ENCODE measurements at regions of chr9 and their contacts with region 1.

Region 1: GRCh38 chr9:33290247-33291030 is at the start of gene NFX1:
- DNase-seq: peak; percentile 97 to 100 (median 99)
- ATAC-seq: peak; percentile 76
- H3K4me3 ChIP-seq: peak within 1 kb of the TSS; percentile 57 to 73
- H3K4me3 Mint-ChIP-seq: peak within 1 kb of the TSS; percentile 88
- H3K27ac ChIP-seq: peak within 1 kb of the TSS; percentile 96 to 98
- H3K27ac Mint-ChIP-seq: peak within 1 kb of the TSS; percentile 100
- H3K4me1 ChIP-seq: peaks cover 62% of the 10 kb centered on the region
- H3K4me1 Mint-ChIP-seq: peaks cover 66% of the 10 kb centered on the region
- H3K27me3 ChIP-seq: no peaks in the 10 kb centered on the region
- H3K27me3 Mint-ChIP-seq: no peaks in the 10 kb centered on the region
- CTCF ChIP-seq: no peak
- total RNA-seq, gene NFX1: 32.9 to 37.9 TPM

Region 2: DNA sequence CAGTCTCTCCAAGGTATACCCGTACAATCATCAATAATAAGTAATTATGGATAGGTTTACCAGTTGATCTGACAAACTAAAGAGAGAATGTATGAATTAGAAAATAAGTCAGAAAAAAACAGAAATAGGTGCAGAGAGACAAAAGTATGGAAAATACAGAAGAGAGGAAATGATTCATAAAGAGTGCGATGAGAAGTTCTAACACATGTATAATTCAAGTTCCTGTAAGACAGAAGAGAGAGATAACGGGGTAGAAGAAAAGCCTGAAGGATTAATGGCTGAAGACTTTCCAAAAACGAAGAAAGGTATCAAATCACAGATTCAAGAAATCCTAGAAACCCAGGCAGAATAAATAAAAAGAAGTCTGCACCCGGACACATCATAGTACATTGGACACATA is 197.8 kb before region 1 on chr9:
- CTCF ChIA-PET with region 1: no interaction called
- POLR2A ChIA-PET with region 1: no interaction called
- intact Hi-C with region 1: no loop called
- DNase-seq: no peak
- ATAC-seq: no peak
- H3K4me3 ChIP-seq: no peak overlapping the region
- H3K4me3 Mint-ChIP-seq: no peak overlapping the region
- H3K27ac ChIP-seq: no peak overlapping the region
- H3K27ac Mint-ChIP-seq: no peak overlapping the region
- H3K4me1 ChIP-seq: no peaks in the 10 kb centered on the region
- H3K4me1 Mint-ChIP-seq: peaks cover 9% of the 10 kb centered on the region
- H3K27me3 ChIP-seq: no peaks in the 10 kb centered on the region
- H3K27me3 Mint-ChIP-seq: no peaks in the 10 kb centered on the region
- CTCF ChIP-seq: no peak

Region 3: GRCh38 chr9:33167046-33167808 is 123.2 kb before region 1 on chr9 and contains the start of gene B4GALT1:
- CTCF ChIA-PET with region 1: no interaction called
- POLR2A ChIA-PET with region 1: interaction called, 7 read pairs
- intact Hi-C with region 1: loop called in 1 of 2 experiments (anchors 1 kb)
- DNase-seq: peak; percentile 94 to 99 (median 97)
- ATAC-seq: peak; percentile 82
- H3K4me3 ChIP-seq: peak within 1 kb of the TSS; percentile 86 to 96
- H3K4me3 Mint-ChIP-seq: peak within 1 kb of the TSS; percentile 93
- H3K27ac ChIP-seq: peak within 1 kb of the TSS; percentile 79 to 94
- H3K27ac Mint-ChIP-seq: peak within 1 kb of the TSS; percentile 99
- H3K4me1 ChIP-seq: peaks cover 54% of the 10 kb centered on the region
- H3K4me1 Mint-ChIP-seq: peaks cover 62% of the 10 kb centered on the region
- H3K27me3 ChIP-seq: no peaks in the 10 kb centered on the region
- H3K27me3 Mint-ChIP-seq: no peaks in the 10 kb centered on the region
- CTCF ChIP-seq: no peak
- total RNA-seq, gene B4GALT1: 139 to 140 TPM

Region 4: GRCh38 chr9:33306037-33306436 is 15.6 kb after region 1 on chr9:
- CTCF ChIA-PET with region 1: interaction called, 4 read pairs
- POLR2A ChIA-PET with region 1: interaction called, 17 read pairs
- intact Hi-C with region 1: loop called (anchors 1 to 2 kb)
- DNase-seq: no peak
- ATAC-seq: peak; percentile 36
- H3K4me3 ChIP-seq: no peak overlapping the region
- H3K4me3 Mint-ChIP-seq: no peak overlapping the region
- H3K27ac ChIP-seq: no peak overlapping the region
- H3K27ac Mint-ChIP-seq: no peak overlapping the region
- H3K4me1 ChIP-seq: no peaks in the 10 kb centered on the region
- H3K4me1 Mint-ChIP-seq: peaks cover 10% of the 10 kb centered on the region
- H3K27me3 ChIP-seq: no peaks in the 10 kb centered on the region
- H3K27me3 Mint-ChIP-seq: no peaks in the 10 kb centered on the region
- CTCF ChIP-seq: no peak

Region 5: DNA sequence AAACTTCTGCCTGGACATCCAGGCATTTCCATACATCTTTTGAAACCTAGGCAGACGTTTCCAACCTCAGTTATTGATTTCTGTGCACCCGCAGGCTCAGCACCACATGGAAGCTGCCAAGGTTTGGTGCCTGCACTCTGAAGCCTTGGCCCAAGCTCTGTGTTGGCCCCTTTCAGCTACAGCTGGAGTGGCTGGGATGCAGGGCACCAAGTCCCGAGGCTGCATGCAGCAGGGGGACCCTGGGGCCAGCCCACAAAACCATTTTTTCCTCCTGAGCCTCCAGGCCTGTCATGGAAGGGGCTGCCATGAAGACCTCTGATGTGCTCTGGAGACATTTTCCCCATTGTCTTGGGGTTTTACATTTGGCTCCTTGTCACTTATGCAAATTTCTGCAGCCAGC is 49.7 kb after region 1 on chr9:
- CTCF ChIA-PET with region 1: no interaction called
- POLR2A ChIA-PET with region 1: no interaction called
- intact Hi-C with region 1: no loop called
- DNase-seq: no peak
- ATAC-seq: no peak
- H3K4me3 ChIP-seq: no peak overlapping the region
- H3K4me3 Mint-ChIP-seq: no peak overlapping the region
- H3K27ac ChIP-seq: no peak overlapping the region
- H3K27ac Mint-ChIP-seq: no peak overlapping the region
- H3K4me1 ChIP-seq: no peaks in the 10 kb centered on the region
- H3K4me1 Mint-ChIP-seq: peaks cover 5% of the 10 kb centered on the region
- H3K27me3 ChIP-seq: no peaks in the 10 kb centered on the region
- H3K27me3 Mint-ChIP-seq: no peaks in the 10 kb centered on the region
- CTCF ChIP-seq: no peak

Region 6: DNA sequence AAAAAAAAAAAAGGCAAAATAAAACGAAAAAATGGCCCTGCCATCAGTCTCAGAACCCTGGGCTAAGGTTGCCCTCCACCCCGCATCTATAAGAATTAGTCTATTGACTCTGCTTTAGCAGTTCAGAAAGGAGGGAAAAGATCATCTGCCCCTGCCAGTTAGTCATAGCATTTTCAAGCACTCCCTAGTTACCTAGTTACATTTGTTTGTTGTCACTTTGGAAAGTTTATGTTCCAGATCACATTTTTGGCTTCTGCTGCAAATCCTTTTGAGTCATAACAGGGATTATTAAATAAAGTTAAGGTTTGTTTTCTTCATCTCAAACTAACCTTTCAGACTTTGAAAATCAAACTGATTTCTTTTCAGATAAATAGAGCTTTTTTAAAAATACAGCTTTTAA is 59.9 kb after region 1 on chr9:
- CTCF ChIA-PET with region 1: no interaction called
- POLR2A ChIA-PET with region 1: no interaction called
- intact Hi-C with region 1: no loop called
- DNase-seq: no peak
- ATAC-seq: no peak
- H3K4me3 ChIP-seq: no peak overlapping the region
- H3K4me3 Mint-ChIP-seq: no peak overlapping the region
- H3K27ac ChIP-seq: no peak overlapping the region
- H3K27ac Mint-ChIP-seq: peak overlapping the region; percentile 52
- H3K4me1 ChIP-seq: no peaks in the 10 kb centered on the region
- H3K4me1 Mint-ChIP-seq: no peaks in the 10 kb centered on the region
- H3K27me3 ChIP-seq: no peaks in the 10 kb centered on the region
- H3K27me3 Mint-ChIP-seq: no peaks in the 10 kb centered on the region
- CTCF ChIP-seq: no peak

Region 7: DNA sequence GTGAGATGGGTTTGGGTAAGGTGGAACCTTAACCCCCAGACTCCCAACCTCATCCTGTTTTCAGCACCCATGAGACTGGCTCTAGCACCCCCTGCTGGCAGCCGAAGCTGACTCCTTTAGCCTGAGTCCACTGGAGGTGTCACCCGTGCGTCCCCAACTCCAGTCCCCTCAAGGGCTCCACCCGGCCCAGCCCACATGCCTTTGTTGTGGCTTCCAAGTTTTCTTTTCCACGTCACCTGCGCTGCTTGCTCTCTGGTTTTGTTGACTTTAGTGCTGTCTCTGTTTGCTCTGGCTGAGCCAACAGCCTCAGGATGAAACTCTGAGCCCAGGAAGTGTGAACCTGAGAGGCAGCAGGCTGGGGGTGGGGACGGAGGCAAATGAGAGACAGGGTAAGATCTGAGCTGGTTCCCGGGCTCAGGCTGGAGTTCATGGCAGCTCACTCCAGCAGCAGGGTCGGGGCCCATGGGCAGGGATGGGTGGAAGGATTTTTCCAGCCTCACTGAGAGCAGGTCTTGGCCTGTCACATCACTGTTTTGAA is 125.1 kb after region 1 on chr9:
- CTCF ChIA-PET with region 1: interaction called, 5 read pairs
- POLR2A ChIA-PET with region 1: interaction called, 6 read pairs
- intact Hi-C with region 1: loop called in 1 of 2 experiments (anchors 2 kb)
- DNase-seq: peak; percentile 83 to 97 (median 93)
- ATAC-seq: peak; percentile 88
- H3K4me3 ChIP-seq: peak overlapping the region in 1 of 2 experiments; percentile 7
- H3K4me3 Mint-ChIP-seq: peak overlapping the region; percentile 72
- H3K27ac ChIP-seq: peak overlapping the region; percentile 34 to 41
- H3K27ac Mint-ChIP-seq: peak overlapping the region; percentile 95
- H3K4me1 ChIP-seq: peaks cover 42% of the 10 kb centered on the region
- H3K4me1 Mint-ChIP-seq: peaks cover 50% of the 10 kb centered on the region
- H3K27me3 ChIP-seq: no peaks in the 10 kb centered on the region
- H3K27me3 Mint-ChIP-seq: no peaks in the 10 kb centered on the region
- CTCF ChIP-seq: peak; percentile 63

Region 8: GRCh38 chr9:33473643-33474352 is 183.4 kb after region 1 on chr9 and contains the start of gene NOL6:
- CTCF ChIA-PET with region 1: no interaction called
- POLR2A ChIA-PET with region 1: interaction called, 10 read pairs
- intact Hi-C with region 1: loop called (anchors 1 to 5 kb)
- DNase-seq: peak; percentile 97 to 99 (median 98)
- ATAC-seq: peak; percentile 99
- H3K4me3 ChIP-seq: peak within 1 kb of the TSS; percentile 91 to 94
- H3K4me3 Mint-ChIP-seq: peak within 1 kb of the TSS; percentile 99
- H3K27ac ChIP-seq: peak within 1 kb of the TSS; percentile 76 to 80
- H3K27ac Mint-ChIP-seq: peak within 1 kb of the TSS; percentile 96
- H3K4me1 ChIP-seq: peaks cover 22% of the 10 kb centered on the region
- H3K4me1 Mint-ChIP-seq: peaks cover 32% of the 10 kb centered on the region
- H3K27me3 ChIP-seq: no peaks in the 10 kb centered on the region
- H3K27me3 Mint-ChIP-seq: no peaks in the 10 kb centered on the region
- CTCF ChIP-seq: no peak
- total RNA-seq, gene NOL6: 41.8 to 42.3 TPM

Region 9: DNA sequence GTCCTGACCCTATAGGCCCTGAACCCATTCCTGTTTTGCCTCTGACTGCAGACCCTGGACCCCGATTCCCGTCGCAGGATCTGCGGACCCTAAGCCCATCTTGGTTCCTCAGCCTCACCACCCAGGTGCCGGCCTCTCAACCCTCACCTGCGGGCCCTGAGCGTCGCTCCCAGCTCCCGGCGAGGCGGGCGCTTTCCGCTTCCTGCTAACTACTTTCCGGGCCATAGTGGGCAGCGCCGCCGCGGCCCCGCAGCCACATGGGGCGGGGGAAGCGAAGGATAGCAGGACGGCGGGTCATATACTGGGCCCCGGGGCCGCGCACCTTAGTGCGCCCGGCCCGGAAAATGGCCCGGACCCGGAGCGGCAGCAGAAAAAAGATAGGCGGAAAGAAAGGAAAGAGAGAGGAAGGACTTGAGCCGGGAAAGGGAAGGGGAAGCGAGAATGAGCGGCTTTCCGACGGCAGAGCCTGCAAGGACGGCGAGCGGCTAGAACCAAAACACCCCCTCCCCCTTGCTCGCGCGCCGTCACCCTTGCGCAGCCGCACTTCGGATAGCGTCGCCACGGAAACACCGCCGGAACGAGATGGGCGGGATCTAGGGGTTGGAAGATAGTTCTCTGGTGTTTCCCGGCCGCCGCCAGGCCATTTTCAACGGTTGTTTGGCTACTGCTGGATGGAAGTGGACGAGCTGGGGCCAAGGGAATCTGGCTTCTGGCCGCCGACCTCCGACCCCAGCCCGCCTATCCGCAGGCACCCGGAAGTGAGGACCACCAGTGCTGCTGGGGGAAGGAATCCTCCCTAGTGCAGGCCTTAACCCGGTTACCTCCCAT is 836.0 kb after region 1 on chr9 and contains the start of gene DCAF12:
- CTCF ChIA-PET with region 1: no interaction called
- POLR2A ChIA-PET with region 1: no interaction called
- intact Hi-C with region 1: loop called in 1 of 2 experiments (anchors 5 kb)
- DNase-seq: peak; percentile 82 to 96 (median 90)
- ATAC-seq: peak; percentile 96
- H3K4me3 ChIP-seq: peak within 1 kb of the TSS; percentile 89 to 96
- H3K4me3 Mint-ChIP-seq: peak within 1 kb of the TSS; percentile 98
- H3K27ac ChIP-seq: peak within 1 kb of the TSS; percentile 79 to 92
- H3K27ac Mint-ChIP-seq: peak within 1 kb of the TSS; percentile 97
- H3K4me1 ChIP-seq: peaks cover 39% of the 10 kb centered on the region
- H3K4me1 Mint-ChIP-seq: peaks cover 49% of the 10 kb centered on the region
- H3K27me3 ChIP-seq: no peaks in the 10 kb centered on the region
- H3K27me3 Mint-ChIP-seq: no peaks in the 10 kb centered on the region
- CTCF ChIP-seq: no peak
- total RNA-seq, gene DCAF12: 4.0 to 4.1 TPM

Measured in CD8-positive, alpha-beta T cell (primary cell).